Activated CD4-positive, alpha-beta memory T cell treated with anti-CD3 and anti-CD28 coated beads for 36 hours (primary cell): ENCODE measurements at regions of chr19 and their contacts with region 1.

Region 1: GRCh38 chr19:6516659-6517291 is 14.1 kb upstream of the TNFSF9 start:
- DNase-seq: peak; percentile 94
- H3K4me3 Mint-ChIP-seq: peak overlapping the region; percentile 88
- H3K27ac Mint-ChIP-seq: peak overlapping the region; percentile 75
- H3K4me1 Mint-ChIP-seq: peaks cover 36% of the 10 kb centered on the region
- H3K27me3 Mint-ChIP-seq: peaks cover 2% of the 10 kb centered on the region

Region 2: DNA sequence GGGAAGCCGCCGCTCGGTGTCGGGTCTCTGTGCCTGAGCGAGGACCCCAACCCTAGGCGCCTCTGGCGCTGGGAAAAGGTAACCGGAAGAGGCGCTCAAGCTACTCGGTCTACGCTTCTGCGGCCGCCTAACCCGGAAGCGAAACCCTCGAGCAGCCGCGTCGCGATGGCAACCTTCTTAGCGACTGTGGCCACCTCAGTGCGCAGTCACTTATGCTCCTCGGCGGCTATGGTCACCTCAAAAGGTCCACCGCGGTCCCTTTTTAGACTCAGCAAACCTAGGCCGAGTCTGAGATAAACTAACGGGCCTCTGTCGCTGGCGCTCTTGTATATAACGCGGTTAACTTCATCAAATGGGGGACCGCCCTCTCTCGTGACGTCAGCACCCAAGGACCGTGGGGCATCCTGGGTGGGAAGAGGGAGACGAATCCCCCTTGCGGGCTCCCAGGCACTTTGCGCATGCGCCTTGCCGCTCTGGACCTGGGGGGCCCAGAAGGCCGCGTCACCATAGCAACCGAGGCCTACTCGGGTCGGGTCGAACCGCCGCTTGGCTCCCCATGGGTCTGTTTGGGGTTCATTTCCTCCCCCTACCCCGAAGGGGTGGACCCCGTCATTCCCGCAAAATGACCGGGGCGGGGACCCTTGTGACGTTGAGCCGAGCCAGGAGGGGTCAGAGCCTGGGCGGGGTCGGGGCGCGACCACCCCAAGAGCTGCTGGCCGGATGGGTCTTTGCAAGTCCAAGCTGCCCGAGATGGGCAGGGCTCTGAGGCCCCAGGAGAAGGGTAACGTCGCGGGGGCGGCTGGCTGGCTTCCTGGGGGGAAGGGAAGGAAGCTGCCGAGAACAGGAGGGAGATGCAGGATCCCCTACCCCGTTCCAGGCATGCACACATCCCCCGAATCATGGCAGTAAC is 123.4 kb before region 1 on chr19 and contains the start of gene GTF2F1:
- CTCF ChIA-PET with region 1: no interaction called
- POLR2A ChIA-PET with region 1: no interaction called
- intact Hi-C with region 1: no loop called
- DNase-seq: peak; percentile 94
- H3K4me3 Mint-ChIP-seq: peak within 1 kb of the TSS; percentile 94
- H3K27ac Mint-ChIP-seq: peak within 1 kb of the TSS; percentile 93
- H3K4me1 Mint-ChIP-seq: peaks cover 24% of the 10 kb centered on the region
- H3K27me3 Mint-ChIP-seq: no peaks in the 10 kb centered on the region
- total RNA-seq, gene GTF2F1: 67.0 to 70.9 TPM

Region 3: GRCh38 chr19:6418562-6418932 is 98.2 kb before region 1 on chr19:
- CTCF ChIA-PET with region 1: no interaction called
- POLR2A ChIA-PET with region 1: no interaction called
- intact Hi-C with region 1: no loop called
- DNase-seq: no peak
- H3K4me3 Mint-ChIP-seq: no peak overlapping the region
- H3K27ac Mint-ChIP-seq: no peak overlapping the region
- H3K4me1 Mint-ChIP-seq: peaks cover 26% of the 10 kb centered on the region
- H3K27me3 Mint-ChIP-seq: no peaks in the 10 kb centered on the region

Region 4: DNA sequence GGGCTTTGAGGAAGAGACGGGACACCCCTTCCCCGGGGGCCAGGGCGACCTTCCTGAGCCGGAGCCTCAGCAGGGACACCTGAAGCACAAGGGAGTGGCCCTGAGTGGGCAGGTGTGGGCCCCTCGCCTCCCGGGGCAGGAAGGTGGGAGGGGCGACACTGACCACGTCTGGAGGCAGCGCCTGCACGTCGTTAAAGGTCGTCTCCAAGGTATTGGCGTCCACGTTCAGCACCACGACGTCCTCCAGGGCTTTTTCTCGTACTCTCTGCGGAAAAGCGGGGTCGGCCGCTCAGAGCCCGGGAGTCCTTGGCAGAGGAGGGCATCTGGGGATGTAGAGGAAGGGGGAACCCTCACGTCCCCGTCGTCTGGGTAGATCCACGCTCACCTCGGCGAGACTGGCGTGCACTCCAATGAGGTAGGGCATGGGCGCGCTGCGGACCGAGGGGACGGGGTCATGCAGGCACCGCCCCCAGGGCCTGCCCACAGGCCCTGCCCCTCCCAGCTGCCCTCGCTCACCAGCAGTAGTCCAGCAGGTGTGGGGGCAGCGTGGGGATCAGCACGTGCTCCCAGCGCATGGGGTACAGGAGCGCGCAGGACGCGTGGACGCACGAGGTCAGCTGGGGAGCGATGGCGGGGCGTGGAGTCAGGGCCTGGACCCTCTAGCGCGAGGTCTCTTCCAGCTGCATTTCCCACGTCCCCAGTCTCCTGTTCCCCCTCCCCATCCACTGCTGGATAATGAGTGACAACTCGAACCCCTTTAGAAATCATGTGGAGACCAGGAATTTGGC is 41.3 kb before region 1 on chr19:
- CTCF ChIA-PET with region 1: no interaction called
- POLR2A ChIA-PET with region 1: no interaction called
- intact Hi-C with region 1: no loop called
- DNase-seq: no peak
- H3K4me3 Mint-ChIP-seq: no peak overlapping the region
- H3K27ac Mint-ChIP-seq: no peak overlapping the region
- H3K4me1 Mint-ChIP-seq: peaks cover 14% of the 10 kb centered on the region
- H3K27me3 Mint-ChIP-seq: no peaks in the 10 kb centered on the region

Region 5: GRCh38 chr19:6590827-6591319 is 74.1 kb after region 1 on chr19 and contains the start of gene CD70:
- CTCF ChIA-PET with region 1: interaction called, 7 read pairs
- POLR2A ChIA-PET with region 1: no interaction called
- intact Hi-C with region 1: loop called (anchors 2 kb)
- DNase-seq: peak; percentile 74
- H3K4me3 Mint-ChIP-seq: peak within 1 kb of the TSS; percentile 71
- H3K27ac Mint-ChIP-seq: no peak within 1 kb of the TSS
- H3K4me1 Mint-ChIP-seq: peaks cover 62% of the 10 kb centered on the region
- H3K27me3 Mint-ChIP-seq: peaks cover 54% of the 10 kb centered on the region
- total RNA-seq, gene CD70: 8.4 to 10.7 TPM

Region 6: DNA sequence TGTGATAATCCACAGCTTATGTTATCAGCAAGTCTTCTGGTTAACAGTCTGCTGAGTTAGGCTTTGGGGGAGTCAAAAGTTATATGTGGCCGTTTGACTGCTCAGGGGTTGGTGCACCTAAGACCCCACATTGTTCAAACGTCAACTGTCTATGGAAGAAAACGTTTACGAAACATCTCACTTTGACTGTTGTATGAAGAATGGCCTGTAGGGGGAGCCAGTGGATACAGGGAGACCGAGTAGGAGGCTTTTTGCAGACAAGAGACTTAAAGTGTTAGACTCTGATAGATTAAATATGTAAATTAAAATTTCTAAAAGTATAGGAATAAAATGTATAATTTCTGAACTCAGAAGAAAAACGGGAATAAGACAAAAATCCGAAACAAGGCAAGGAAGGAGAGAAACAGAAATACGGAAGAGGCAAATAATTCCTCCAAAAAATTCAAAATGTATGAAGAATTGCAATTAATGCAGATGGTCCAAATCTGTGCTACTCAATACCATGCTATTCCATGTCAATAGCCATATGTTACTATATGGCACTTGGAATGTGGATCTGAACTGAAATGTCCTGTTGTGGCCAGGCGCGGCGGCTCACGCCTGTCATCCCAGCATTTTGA is 115.3 kb after region 1 on chr19:
- CTCF ChIA-PET with region 1: interaction called, 43 read pairs
- POLR2A ChIA-PET with region 1: no interaction called
- intact Hi-C with region 1: loop called (anchors 1 kb)
- DNase-seq: peak; percentile 80
- H3K4me3 Mint-ChIP-seq: no peak overlapping the region
- H3K27ac Mint-ChIP-seq: no peak overlapping the region
- H3K4me1 Mint-ChIP-seq: peaks cover 26% of the 10 kb centered on the region
- H3K27me3 Mint-ChIP-seq: peaks cover 4% of the 10 kb centered on the region

Region 7: GRCh38 chr19:6663236-6664201 is 146.7 kb after region 1 on chr19:
- CTCF ChIA-PET with region 1: no interaction called
- POLR2A ChIA-PET with region 1: no interaction called
- intact Hi-C with region 1: loop called (anchors 5 kb)
- DNase-seq: peak; percentile 75
- H3K4me3 Mint-ChIP-seq: no peak overlapping the region
- H3K27ac Mint-ChIP-seq: no peak overlapping the region
- H3K4me1 Mint-ChIP-seq: peaks cover 26% of the 10 kb centered on the region
- H3K27me3 Mint-ChIP-seq: no peaks in the 10 kb centered on the region

Region 8: GRCh38 chr19:6767357-6768235 is 250.8 kb after region 1 on chr19 and contains the start of gene SH2D3A:
- CTCF ChIA-PET with region 1: interaction called, 11 read pairs
- POLR2A ChIA-PET with region 1: no interaction called
- intact Hi-C with region 1: loop called (anchors 5 kb)
- DNase-seq: peak; percentile 97
- H3K4me3 Mint-ChIP-seq: peak within 1 kb of the TSS; percentile 85
- H3K27ac Mint-ChIP-seq: peak within 1 kb of the TSS; percentile 92
- H3K4me1 Mint-ChIP-seq: peaks cover 39% of the 10 kb centered on the region
- H3K27me3 Mint-ChIP-seq: no peaks in the 10 kb centered on the region
- total RNA-seq, gene SH2D3A: 17.1 to 18.2 TPM